Left cardiac atrium (tissue), 4 donors: ENCODE measurements at regions of chr18 and their contacts with region 1.

Region 1: DNA sequence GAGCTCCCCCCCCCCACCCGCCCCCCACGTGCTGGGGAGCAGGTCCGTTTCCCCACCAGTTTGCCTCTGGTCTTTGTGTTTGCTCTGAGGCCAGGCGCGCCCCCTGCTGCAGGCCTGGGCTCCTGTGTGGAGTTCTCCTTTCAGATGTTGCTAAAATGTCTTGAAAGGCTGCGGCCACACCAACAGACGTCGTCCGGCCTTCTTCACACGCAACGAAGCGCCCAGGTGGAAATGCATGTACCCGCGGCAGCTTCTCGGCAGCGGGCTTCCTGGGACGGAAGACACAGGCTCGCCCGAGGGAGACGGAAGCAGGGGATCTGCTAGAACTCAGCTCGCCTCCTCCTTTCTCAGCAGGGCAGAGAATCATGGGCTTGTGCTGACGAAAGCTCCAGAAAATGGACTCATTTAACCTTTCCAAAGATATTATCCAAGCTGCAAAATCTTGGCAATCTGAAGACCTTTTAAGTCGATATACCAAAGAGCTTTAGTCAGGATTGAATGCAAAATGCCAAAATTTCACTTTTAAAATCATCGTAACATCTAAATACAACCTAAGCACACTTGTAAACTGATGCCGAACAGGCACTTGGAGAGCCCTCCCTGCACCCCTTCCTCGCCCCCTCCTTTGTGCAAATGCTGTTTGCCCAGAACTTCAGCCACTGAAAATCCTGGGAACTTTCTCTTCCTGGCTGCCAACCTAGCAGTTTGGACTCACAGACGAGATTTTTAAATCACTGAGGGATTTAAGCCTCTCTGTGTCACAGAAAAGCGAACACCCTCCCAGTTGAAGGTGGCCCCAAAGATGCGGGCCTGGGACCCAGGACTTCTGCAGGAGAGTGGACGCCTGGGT is 125.5 kb upstream of the ZNF516 start:
- DNase-seq: peak; percentile 68
- ATAC-seq: peak; percentile 83 to 88

Region 2: DNA sequence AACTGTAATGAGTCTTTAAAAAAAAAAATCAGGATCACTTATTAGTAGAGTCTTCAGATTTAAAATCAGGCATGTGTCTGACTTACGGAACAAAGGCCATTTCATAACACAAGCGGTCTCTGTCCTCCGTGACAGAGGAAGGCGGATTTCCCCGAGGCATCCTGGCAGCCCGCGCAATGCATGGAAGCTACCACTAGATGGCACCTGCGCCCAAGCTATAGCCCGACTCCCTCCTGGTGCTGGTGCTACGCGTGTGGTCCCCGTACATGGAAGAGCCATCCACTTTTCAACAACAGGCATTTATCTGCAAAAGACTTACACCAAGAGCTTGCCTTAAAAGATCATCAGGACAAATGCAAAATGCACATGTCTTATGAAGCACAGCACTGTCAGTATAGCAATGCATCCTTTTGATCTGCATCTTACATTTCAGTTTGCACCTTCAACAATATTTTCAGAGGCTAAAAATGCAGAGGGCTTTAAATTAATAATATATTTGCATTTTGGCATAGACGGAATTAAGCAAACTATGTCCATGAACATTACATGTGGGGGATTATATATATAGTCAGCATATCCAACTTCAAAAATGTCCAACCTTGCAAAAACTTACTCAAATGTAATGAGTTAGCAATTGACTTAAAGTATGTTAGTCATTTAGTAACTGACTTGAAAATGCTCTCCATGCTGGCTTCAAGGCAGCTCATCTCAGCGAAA is 221.5 kb before region 1 on chr18:
- intact Hi-C with region 1: loop called (anchors 2 to 10 kb)
- DNase-seq: peak; percentile 86
- ATAC-seq: peak; percentile 91

Region 3: DNA sequence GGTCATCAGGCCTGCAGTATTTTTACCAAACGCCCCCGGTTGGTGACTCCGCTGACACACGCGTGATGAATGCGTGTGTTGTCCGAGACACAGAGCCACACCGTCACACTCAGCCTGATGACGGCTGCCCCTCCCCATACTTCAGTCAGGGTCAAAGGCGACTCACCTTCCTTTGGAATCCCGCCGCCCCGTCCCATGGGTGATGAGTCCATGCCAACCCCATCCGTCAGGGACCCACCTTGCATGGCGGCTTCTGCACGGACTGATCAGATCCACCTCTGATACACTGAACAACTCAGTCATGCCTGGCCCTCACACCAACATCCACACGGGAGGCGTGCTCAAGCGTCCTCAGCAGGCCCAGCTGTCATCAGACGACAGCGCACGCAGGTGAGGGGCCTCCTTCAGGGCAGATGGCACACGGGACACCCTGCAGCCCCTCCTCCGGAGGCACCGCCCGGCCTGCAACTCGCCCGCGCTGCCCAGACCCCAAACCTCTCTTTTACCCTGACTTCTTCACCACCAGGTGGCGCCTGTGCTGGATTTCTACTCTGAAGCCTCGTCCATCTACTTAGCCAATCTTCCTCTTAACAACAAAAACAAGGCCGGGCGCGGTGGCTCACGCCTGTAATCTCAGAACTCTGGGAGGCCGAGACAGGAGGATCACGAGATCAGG is 214.7 kb before region 1 on chr18:
- intact Hi-C with region 1: loop called in 1 of 2 experiments (anchors 10 kb)
- DNase-seq: peak; percentile 74
- ATAC-seq: peak in 1 of 2 donors; percentile 47

Region 4: GRCh38 chr18:76476665-76477561 is 143.6 kb before region 1 on chr18:
- intact Hi-C with region 1: no loop called
- DNase-seq: no peak
- ATAC-seq: peak; percentile 52 to 78

Region 5: GRCh38 chr18:76565238-76566180 is 55.0 kb before region 1 on chr18:
- intact Hi-C with region 1: loop called in 1 of 2 experiments (anchors 2 kb)
- DNase-seq: peak; percentile 69
- ATAC-seq: peak; percentile 94 to 97